IMR-90 (cell line): ENCODE measurements at regions of chr6 and their contacts with region 1.

Region 1: DNA sequence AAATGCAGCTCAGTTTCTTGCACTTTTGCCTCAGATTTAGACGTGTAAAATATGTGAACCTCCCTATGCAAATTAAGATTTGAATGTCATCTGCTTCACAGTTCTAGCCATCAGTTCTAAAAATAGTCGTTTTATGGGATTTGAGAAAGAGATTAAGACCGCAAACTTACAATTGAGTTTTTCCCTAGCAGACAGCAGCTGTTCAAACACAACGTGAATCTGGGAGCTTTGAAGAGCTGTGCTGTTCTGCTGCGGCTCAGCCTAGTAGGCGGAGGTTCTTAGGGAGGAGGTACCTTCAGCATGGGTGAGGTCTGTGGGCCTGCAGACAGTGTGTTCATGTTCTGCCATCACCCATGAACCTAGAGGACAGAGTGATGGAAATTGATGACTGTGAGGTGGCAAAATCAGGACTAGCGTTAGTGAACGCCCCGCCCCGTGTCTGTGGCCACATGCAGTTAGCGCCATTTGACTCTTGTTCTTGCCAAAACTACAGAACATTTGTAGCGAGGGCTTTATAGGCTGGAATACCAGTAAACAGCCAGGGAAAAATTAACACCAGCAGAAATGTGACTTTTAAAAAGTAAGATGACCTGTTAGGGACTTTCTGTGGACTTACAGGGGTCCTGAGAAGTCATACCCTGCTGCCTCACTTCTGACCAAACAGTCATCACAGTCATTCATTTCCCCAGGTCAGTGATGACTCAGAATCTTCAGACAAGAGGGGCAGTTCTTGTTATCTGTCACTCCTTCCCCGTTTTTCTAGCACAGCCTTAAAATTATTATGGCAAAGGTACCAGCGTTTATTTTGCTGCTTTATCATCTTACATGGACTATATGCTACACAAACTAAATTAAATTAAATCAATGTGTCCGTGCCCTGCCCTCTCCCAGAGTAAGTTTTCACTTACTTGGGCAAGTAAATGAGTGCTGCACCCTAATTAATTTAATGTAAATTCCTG is 84.3 kb upstream of the TMEM181 start:
- DNase-seq: peak; percentile 57
- ATAC-seq: peak; percentile 33; the same call in 1 of the 2 replicates
- H3K4me3 ChIP-seq: no peak overlapping the region
- H3K27ac ChIP-seq: 0 out of 2 replicates have a peak overlapping the region, but pooled peaks have one; percentile 0
- H3K4me1 ChIP-seq: peaks cover 6% of the 10 kb centered on the region; the same call in 1 of the 2 replicates
- H3K27me3 ChIP-seq: no peaks in the 10 kb centered on the region
- CTCF ChIP-seq: no peak
- POLR2A ChIP-seq: no peak
- RAD21 ChIP-seq: no peak

Region 2: GRCh38 chr6:158417760-158418098 is 57.9 kb before region 1 on chr6:
- CTCF ChIA-PET with region 1: no interaction called
- POLR2A ChIA-PET with region 1: interaction called, 26 read pairs
- dilution Hi-C with region 1: no loop called
- in situ Hi-C with region 1: no loop called
- intact Hi-C with region 1: no loop called
- DNase-seq: peak; percentile 79
- ATAC-seq: peak; percentile 87
- H3K4me3 ChIP-seq: no peak overlapping the region
- H3K27ac ChIP-seq: no peak overlapping the region
- H3K4me1 ChIP-seq: peaks cover 7% of the 10 kb centered on the region
- H3K27me3 ChIP-seq: no peaks in the 10 kb centered on the region
- CTCF ChIP-seq: no peak
- POLR2A ChIP-seq: no peak
- RAD21 ChIP-seq: no peak

Region 3: DNA sequence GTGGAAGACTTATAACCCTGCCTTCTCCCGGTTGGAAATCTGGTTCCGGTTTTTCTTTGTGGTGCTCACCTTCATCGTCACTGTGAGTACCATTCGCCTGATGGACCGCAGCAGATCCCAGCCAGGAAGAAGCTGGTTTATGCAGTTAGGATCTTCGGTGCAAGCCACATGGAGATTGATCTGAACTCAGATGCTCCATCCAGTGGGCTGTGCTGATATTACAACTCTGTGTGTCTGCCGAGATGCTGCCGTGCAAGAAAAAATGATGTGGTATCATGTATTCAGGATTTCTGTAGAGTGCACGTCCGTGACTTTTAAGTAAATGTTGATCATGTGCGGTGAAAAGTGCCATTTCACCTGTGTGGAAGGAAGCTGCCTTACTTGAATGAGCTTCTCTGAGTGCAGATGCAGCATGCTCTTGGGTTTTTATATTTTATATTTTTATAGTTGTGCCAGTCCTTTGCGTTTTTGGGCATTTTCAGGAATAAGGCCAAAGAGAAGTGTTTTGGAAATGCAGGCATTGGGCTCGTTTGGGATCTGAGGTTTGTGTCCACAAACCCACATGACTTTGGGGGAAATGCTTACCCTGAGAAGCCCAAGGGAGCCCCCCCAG is 129.7 kb after region 1 on chr6:
- CTCF ChIA-PET with region 1: no interaction called
- POLR2A ChIA-PET with region 1: interaction called, 12 read pairs
- dilution Hi-C with region 1: no loop called
- in situ Hi-C with region 1: no loop called
- intact Hi-C with region 1: no loop called
- DNase-seq: peak; percentile 77
- ATAC-seq: peak; percentile 99
- H3K4me3 ChIP-seq: no peak overlapping the region
- H3K27ac ChIP-seq: no peak overlapping the region
- H3K4me1 ChIP-seq: no peaks in the 10 kb centered on the region
- H3K27me3 ChIP-seq: no peaks in the 10 kb centered on the region
- CTCF ChIP-seq: peak; percentile 77
- POLR2A ChIP-seq: no peak
- RAD21 ChIP-seq: peak; percentile 84